Activated CD4-positive, alpha-beta memory T cell treated with anti-CD3 and anti-CD28 coated beads for 36 hours (primary cell): ENCODE measurements at regions of chr20 and their contacts with region 1.

Region 1: GRCh38 chr20:8735674-8736073 is 333.2 kb upstream of the PLCB4 start:
- DNase-seq: no peak
- H3K4me3 Mint-ChIP-seq: no peak overlapping the region
- H3K27ac Mint-ChIP-seq: no peak overlapping the region
- H3K4me1 Mint-ChIP-seq: peaks cover 5% of the 10 kb centered on the region
- H3K27me3 Mint-ChIP-seq: no peaks in the 10 kb centered on the region

Region 2: DNA sequence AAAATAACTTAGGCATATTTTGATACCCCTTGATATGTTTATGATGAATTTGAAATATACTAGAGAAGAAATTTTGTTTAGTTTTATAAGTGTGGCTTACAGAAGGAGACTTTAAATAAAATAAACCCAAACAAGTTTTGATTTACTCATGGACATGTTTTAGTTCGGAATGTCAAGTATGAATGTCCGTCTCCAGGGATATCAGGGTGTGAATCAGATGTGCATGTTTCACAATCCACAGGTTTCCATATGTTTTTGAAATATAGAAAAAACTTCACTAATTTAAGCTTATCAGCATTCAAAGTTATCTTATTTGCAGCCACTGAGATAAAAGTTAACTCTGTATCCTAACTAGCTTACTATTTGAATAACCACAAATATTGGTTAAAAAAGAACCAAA is 552.1 kb before region 1 on chr20:
- CTCF ChIA-PET with region 1: no interaction called
- POLR2A ChIA-PET with region 1: no interaction called
- intact Hi-C with region 1: no loop called
- DNase-seq: no peak
- H3K4me3 Mint-ChIP-seq: no peak overlapping the region
- H3K27ac Mint-ChIP-seq: no peak overlapping the region
- H3K4me1 Mint-ChIP-seq: no peaks in the 10 kb centered on the region
- H3K27me3 Mint-ChIP-seq: no peaks in the 10 kb centered on the region

Region 3: GRCh38 chr20:8571611-8572010 is 164.1 kb before region 1 on chr20:
- CTCF ChIA-PET with region 1: no interaction called
- POLR2A ChIA-PET with region 1: no interaction called
- intact Hi-C with region 1: no loop called
- DNase-seq: no peak
- H3K4me3 Mint-ChIP-seq: no peak overlapping the region
- H3K27ac Mint-ChIP-seq: no peak overlapping the region
- H3K4me1 Mint-ChIP-seq: no peaks in the 10 kb centered on the region
- H3K27me3 Mint-ChIP-seq: no peaks in the 10 kb centered on the region

Region 4: GRCh38 chr20:8664778-8665177 is 70.9 kb before region 1 on chr20:
- CTCF ChIA-PET with region 1: interaction called, 3 read pairs
- POLR2A ChIA-PET with region 1: no interaction called
- intact Hi-C with region 1: loop called (anchors 5 kb)
- DNase-seq: no peak
- H3K4me3 Mint-ChIP-seq: no peak overlapping the region
- H3K27ac Mint-ChIP-seq: no peak overlapping the region
- H3K4me1 Mint-ChIP-seq: peaks cover 4% of the 10 kb centered on the region
- H3K27me3 Mint-ChIP-seq: no peaks in the 10 kb centered on the region